HEK293 (cell line): ENCODE measurements at regions of chr3 and their contacts with region 1.

Region 1: GRCh38 chr3:133106169-133106568 is 68.0 kb downstream of the TMEM108 start:
- H3K4me3 ChIP-seq: no peak overlapping the region
- H3K27ac ChIP-seq: no peak overlapping the region
- H3K4me1 ChIP-seq: no peaks in the 10 kb centered on the region
- CTCF ChIP-seq: no peak

Region 2: DNA sequence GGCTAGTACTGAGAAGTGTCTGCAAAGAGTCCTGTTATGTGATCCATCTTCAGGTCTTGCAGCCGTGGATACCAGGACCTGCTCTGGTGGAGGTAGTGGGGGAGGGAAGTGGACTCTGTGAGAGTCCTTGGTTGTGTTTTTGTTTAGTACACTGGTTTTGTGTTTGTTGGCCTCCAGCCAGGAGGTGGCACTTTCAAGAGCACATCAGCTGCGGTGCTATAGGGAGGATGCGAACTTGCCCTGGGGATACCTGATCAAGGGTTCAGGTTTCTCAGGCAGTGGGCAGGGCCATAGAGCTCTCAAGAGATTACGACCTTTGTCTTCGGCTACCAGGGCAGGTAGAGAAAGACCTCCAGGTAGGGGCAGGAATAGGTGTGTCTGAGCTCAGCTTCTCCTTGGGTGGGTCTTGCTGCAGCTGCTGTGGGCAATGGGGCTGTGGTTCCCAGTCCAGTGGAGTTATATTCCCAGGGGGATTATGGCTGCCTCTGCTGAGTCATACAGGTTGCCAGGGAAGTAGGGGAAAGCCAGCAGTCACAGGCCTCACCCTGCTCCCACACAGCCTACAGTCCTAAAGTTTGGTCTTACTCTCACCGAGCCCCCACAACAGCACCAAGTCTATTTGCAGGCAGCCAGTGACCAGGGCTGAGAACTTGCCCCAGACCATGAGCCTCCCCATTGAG is 251.2 kb before region 1 on chr3:
- CTCF ChIA-PET with region 1: no interaction called
- POLR2A ChIA-PET with region 1: no interaction called
- H3K4me3 ChIP-seq: no peak overlapping the region
- H3K27ac ChIP-seq: no peak overlapping the region
- H3K4me1 ChIP-seq: no peaks in the 10 kb centered on the region
- CTCF ChIP-seq: no peak

Region 3: GRCh38 chr3:133506215-133506901 is 400.2 kb after region 1 on chr3:
- CTCF ChIA-PET with region 1: no interaction called
- POLR2A ChIA-PET with region 1: no interaction called
- H3K4me3 ChIP-seq: no peak overlapping the region
- H3K27ac ChIP-seq: no peak overlapping the region
- H3K4me1 ChIP-seq: no peaks in the 10 kb centered on the region
- CTCF ChIP-seq: no peak

Region 4: GRCh38 chr3:134232151-134232550 is 1126.0 kb after region 1 on chr3:
- CTCF ChIA-PET with region 1: no interaction called
- POLR2A ChIA-PET with region 1: interaction called, 12 read pairs
- H3K4me3 ChIP-seq: no peak overlapping the region
- H3K27ac ChIP-seq: no peak overlapping the region
- H3K4me1 ChIP-seq: peaks cover 8% of the 10 kb centered on the region
- CTCF ChIP-seq: no peak